ENCODE measurements at regions of chr9 and their contacts with region 1.

Region 1: GRCh38 chr9:128361986-128362646 is 9.1 kb upstream of the URM1 start:
- DNase-seq: no peak
- ATAC-seq: peak; percentile 96
- H3K4me3 ChIP-seq: peak overlapping the region; percentile 59; the same call in 1 of the 2 replicates
- H3K27ac ChIP-seq: no peak overlapping the region
- H3K4me1 ChIP-seq: peaks cover 7% of the 10 kb centered on the region
- H3K27me3 ChIP-seq: no peaks in the 10 kb centered on the region
- CTCF ChIP-seq: peak; percentile 90 to 92 (median 90)
- EP300 ChIP-seq: no peak
- POLR2A ChIP-seq: peak; percentile 28; the same call in 1 of the 2 replicates
- RAD21 ChIP-seq: peak; percentile 62

Region 2: GRCh38 chr9:128296337-128297220 is 65.5 kb before region 1 on chr9:
- CTCF ChIA-PET with region 1: interaction called, 10 read pairs
- POLR2A ChIA-PET with region 1: no interaction called
- RAD21 ChIA-PET with region 1: interaction called, 7 read pairs
- SMC1A ChIA-PET with region 1: interaction called, 9 read pairs
- in situ Hi-C with region 1: no loop called
- intact Hi-C with region 1: no loop called
- DNase-seq: no peak
- ATAC-seq: no peak
- H3K4me3 ChIP-seq: no peak overlapping the region
- H3K27ac ChIP-seq: no peak overlapping the region
- H3K4me1 ChIP-seq: no peaks in the 10 kb centered on the region
- H3K27me3 ChIP-seq: no peaks in the 10 kb centered on the region
- CTCF ChIP-seq: no peak
- EP300 ChIP-seq: no peak
- POLR2A ChIP-seq: no peak
- RAD21 ChIP-seq: no peak

Region 3: DNA sequence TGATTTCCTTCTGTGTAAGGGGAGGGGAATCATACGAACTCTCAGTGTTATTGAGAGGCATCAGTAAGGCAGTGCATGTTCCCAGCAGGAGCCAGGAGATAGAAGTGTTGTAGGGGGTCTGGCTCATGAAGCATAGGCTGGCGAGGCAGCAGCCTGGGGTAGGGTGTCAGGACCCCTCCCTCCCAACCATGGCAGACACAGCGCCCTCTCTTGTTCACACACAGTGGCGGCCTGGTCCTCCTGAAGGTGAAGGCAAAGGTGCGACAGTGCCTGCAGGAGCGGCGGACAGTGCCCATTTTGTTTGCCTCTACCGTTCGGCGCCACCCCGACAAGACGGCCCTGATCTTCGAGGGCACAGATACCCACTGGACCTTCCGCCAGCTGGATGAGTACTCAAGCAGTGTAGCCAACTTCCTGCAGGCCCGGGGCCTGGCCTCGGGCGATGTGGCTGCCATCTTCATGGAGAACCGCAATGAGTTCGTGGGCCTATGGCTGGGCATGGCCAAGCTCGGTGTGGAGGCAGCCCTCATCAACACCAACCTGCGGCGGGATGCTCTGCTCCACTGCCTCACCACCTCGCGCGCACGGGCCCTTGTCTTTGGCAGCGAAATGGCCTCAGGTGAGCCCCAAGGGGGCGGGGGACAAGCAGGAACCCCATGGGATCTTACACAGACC is 17.0 kb before region 1 on chr9:
- CTCF ChIA-PET with region 1: interaction called, 14 read pairs
- POLR2A ChIA-PET with region 1: no interaction called
- RAD21 ChIA-PET with region 1: interaction called, 8 read pairs
- SMC1A ChIA-PET with region 1: interaction called, 4 read pairs
- in situ Hi-C with region 1: no loop called
- intact Hi-C with region 1: no loop called
- DNase-seq: no peak
- ATAC-seq: no peak
- H3K4me3 ChIP-seq: no peak overlapping the region
- H3K27ac ChIP-seq: no peak overlapping the region
- H3K4me1 ChIP-seq: no peaks in the 10 kb centered on the region
- H3K27me3 ChIP-seq: no peaks in the 10 kb centered on the region
- CTCF ChIP-seq: no peak
- EP300 ChIP-seq: no peak
- POLR2A ChIP-seq: no peak
- RAD21 ChIP-seq: no peak

Region 4: GRCh38 chr9:128412120-128412790 is 50.1 kb after region 1 on chr9:
- CTCF ChIA-PET with region 1: interaction called, 21 read pairs
- POLR2A ChIA-PET with region 1: interaction called, 3 read pairs
- RAD21 ChIA-PET with region 1: interaction called, 4 read pairs
- SMC1A ChIA-PET with region 1: interaction called, 3 read pairs
- in situ Hi-C with region 1: no loop called
- intact Hi-C with region 1: loop called (anchors 5 kb)
- DNase-seq: no peak
- ATAC-seq: peak; percentile 57
- H3K4me3 ChIP-seq: no peak overlapping the region
- H3K27ac ChIP-seq: no peak overlapping the region
- H3K4me1 ChIP-seq: no peaks in the 10 kb centered on the region
- H3K27me3 ChIP-seq: peaks cover 1 to 5% of the 10 kb centered on the region in 2 experiments; a peak in 3 of 4 replicates
- CTCF ChIP-seq: peak; percentile 39 to 56 (median 43)
- EP300 ChIP-seq: no peak
- POLR2A ChIP-seq: no peak
- RAD21 ChIP-seq: peak; percentile 64

Region 5: DNA sequence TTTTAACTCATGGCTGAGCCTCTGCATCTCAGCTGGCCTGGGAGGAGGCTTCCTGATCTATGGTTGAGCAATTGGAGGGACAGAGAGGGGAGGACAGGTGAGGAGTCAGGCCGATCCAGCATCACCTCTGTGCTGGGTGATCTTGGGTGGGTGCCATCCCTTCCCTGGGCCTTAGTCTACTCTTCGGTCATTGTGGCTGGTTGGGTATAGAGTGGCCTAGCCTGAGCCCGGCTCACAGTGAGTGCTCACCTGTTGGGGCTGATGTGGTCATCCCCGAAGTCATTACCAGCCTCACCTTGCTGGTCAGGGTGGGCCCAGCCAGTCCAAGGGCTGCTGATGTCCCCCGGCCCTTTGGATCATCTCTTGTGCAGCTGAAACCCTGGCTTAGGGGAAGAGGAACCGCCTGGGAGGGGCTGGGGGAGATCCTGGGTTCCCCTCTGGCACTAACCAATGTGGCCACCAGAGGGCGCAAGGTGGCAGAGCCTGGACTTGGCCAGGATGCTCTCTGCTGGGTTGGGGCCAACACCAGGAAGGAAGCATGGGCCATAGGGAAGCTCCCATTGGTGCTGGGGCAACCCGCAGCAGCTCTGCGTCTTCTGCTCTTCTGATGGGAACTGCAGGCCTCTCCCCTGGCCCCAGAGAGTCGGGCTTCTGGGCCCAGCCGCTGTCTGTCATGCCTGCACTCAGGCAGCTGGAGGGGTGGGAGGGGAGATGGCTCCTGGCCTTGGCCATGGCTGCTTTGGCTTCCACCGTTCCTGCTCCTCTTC is 76.4 kb after region 1 on chr9:
- CTCF ChIA-PET with region 1: interaction called, 10 read pairs
- POLR2A ChIA-PET with region 1: no interaction called
- RAD21 ChIA-PET with region 1: interaction called, 16 read pairs
- SMC1A ChIA-PET with region 1: interaction called, 5 read pairs
- in situ Hi-C with region 1: no loop called
- intact Hi-C with region 1: no loop called
- DNase-seq: no peak
- ATAC-seq: peak; percentile 99
- H3K4me3 ChIP-seq: no peak overlapping the region
- H3K27ac ChIP-seq: no peak overlapping the region
- H3K4me1 ChIP-seq: no peaks in the 10 kb centered on the region
- H3K27me3 ChIP-seq: no peaks in the 10 kb centered on the region
- CTCF ChIP-seq: peak; percentile 86 to 96 (median 94)
- EP300 ChIP-seq: no peak
- POLR2A ChIP-seq: no peak
- RAD21 ChIP-seq: peak; percentile 72